Activated naive CD4-positive, alpha-beta T cell treated with anti-CD3 and anti-CD28 coated beads for 36 hours (primary cell): ENCODE measurements at regions of chr6 and their contacts with region 1.

Region 1: DNA sequence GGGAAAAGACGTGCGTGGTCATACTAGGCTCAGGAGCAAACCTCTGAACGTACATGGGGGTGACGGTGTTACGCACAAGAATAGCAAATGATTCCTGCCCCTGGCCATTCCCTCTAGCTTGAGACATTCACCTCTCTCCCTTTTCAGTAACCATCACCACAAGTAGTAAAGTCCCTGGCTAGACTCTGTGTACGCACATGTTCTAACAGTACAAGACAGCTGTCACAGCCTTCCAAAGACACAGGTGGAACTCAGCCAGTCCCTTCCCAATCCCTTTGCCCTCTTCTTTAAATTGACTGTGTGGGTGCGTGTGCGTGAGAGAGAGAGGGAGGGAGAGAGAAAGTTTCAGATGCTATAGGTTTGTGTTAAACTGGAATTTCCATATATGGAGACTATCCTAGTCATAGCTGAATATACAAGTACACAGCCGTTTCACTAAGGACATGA is 67.3 kb downstream of the LY86 start:
- DNase-seq: peak; percentile 49
- H3K4me3 Mint-ChIP-seq: peak overlapping the region; percentile 2
- H3K27ac Mint-ChIP-seq: peak overlapping the region; percentile 90
- H3K4me1 Mint-ChIP-seq: peaks cover 87% of the 10 kb centered on the region
- H3K27me3 Mint-ChIP-seq: no peaks in the 10 kb centered on the region

Region 2: DNA sequence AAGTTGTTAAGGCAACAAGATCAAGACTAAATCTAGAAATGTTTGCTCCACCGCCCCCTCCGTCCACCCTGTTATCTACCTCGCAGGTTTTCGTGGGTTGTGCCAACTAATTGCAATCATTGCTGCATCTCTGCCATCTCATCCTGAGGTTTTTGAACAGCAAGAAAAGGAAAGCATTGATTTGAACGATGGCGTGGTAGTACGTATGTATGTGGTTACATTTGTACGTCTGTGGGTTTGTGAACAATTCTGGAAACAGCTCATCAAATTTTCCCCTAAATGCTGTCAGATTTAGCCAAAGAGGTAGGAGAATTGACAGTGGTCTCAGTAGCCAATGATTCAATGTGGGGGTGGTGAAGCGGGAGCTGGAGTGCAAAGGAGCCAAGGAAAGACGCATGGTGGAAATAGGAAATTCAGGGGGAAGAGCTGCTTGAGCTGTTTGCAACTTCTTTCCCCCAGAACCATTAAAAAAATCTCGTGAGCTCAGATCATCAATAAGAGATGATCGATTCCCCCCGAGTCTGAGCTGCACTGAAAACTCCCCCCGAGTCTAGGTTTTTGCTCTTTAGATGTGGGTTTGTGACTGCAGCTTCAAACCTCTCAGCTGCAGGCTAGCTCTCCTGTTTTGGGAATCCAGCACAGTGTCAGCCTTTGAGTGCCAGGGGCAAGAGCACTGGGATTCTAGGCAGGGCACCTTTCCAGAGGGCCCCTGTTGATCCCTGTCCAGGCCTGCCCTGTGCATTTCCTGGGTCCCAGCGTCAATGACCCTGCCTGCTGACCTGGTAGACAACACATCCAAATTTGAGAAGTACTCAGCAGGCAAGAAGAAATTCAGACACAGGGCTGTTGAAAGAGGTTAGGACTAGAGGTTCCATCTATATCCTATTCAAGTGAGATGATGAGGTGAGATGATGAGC is 139.9 kb before region 1 on chr6:
- CTCF ChIA-PET with region 1: no interaction called
- intact Hi-C with region 1: loop called (anchors 2 kb)
- DNase-seq: peak; percentile 86
- H3K4me3 Mint-ChIP-seq: no peak overlapping the region
- H3K27ac Mint-ChIP-seq: peak overlapping the region; percentile 46
- H3K4me1 Mint-ChIP-seq: peaks cover 23% of the 10 kb centered on the region
- H3K27me3 Mint-ChIP-seq: peaks cover 68% of the 10 kb centered on the region

Region 3: DNA sequence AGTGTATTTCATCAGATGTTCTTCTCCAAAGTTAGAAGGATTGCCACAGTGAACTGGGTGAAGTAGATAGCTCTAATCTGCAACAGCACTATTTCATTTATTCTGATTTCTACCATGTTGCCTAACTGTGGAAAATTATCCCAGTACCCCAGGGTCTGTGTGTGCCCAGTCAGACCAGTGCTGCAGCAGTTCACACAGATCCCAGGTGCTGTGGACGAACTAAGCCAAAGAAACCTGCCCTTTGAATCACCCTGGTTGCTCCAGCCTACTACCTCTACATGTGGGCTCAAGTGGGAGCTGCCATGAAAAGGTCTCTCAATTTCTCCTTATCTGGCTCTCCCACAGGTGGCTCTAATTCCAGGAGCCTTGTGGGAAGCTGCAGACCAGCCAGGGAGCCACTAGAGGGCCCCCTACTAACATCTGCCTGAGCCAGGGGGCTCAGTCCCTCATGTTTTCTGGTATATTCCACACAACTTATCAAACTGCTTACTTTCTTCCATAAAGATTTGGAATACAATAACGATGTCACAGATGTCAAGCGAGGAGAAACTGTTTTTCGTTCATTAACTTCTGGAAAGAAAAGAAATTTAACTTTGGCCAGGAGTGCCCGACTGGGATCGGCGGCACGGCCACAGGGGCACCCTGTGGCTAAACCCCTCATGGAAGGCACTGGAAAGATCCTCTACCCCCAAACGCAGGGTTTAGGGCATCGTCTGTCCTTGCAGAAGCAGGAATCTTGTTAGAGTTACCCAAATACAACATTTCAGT is 98.9 kb before region 1 on chr6:
- CTCF ChIA-PET with region 1: interaction called, 4 read pairs
- intact Hi-C with region 1: loop called (anchors 1 kb)
- DNase-seq: peak; percentile 68
- H3K4me3 Mint-ChIP-seq: no peak overlapping the region
- H3K27ac Mint-ChIP-seq: no peak overlapping the region
- H3K4me1 Mint-ChIP-seq: peaks cover 44% of the 10 kb centered on the region
- H3K27me3 Mint-ChIP-seq: no peaks in the 10 kb centered on the region

Region 4: DNA sequence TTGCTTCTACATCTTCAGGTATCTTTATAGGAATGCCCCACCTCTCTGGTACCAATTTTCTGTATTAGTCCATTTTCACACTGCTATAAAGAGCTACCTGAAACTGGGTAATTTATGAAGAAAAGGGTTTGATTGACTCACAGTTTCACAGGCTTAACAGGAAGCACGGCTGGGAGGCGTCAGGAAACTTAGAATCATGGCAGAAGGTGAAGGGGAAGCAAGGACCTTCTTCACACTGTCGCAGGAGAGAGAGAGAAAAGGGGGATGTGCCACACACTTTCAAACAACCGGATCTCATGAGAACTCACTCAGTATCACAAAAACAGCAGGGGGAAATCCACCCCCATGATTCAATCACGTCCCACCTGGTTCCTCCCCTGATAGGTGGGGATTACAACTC is 91.7 kb before region 1 on chr6:
- CTCF ChIA-PET with region 1: no interaction called
- intact Hi-C with region 1: loop called (anchors 1 kb)
- DNase-seq: peak; percentile 67
- H3K4me3 Mint-ChIP-seq: no peak overlapping the region
- H3K27ac Mint-ChIP-seq: peak overlapping the region; percentile 67
- H3K4me1 Mint-ChIP-seq: peaks cover 46% of the 10 kb centered on the region
- H3K27me3 Mint-ChIP-seq: no peaks in the 10 kb centered on the region

Region 5: GRCh38 chr6:6588064-6588923 is 67.5 kb before region 1 on chr6 and contains the start of gene LY86:
- CTCF ChIA-PET with region 1: interaction called, 3 read pairs
- intact Hi-C with region 1: loop called (anchors 1 kb)
- DNase-seq: peak; percentile 46
- H3K4me3 Mint-ChIP-seq: peak within 1 kb of the TSS; percentile 75
- H3K27ac Mint-ChIP-seq: peak within 1 kb of the TSS; percentile 87
- H3K4me1 Mint-ChIP-seq: peaks cover 75% of the 10 kb centered on the region
- H3K27me3 Mint-ChIP-seq: no peaks in the 10 kb centered on the region
- total RNA-seq, gene LY86: 1.8 to 2.0 TPM

Region 6: GRCh38 chr6:6610031-6610591 is 45.7 kb before region 1 on chr6:
- CTCF ChIA-PET with region 1: no interaction called
- intact Hi-C with region 1: loop called (anchors 1 kb)
- DNase-seq: peak; percentile 73
- H3K4me3 Mint-ChIP-seq: peak overlapping the region; percentile 5
- H3K27ac Mint-ChIP-seq: peak overlapping the region; percentile 83
- H3K4me1 Mint-ChIP-seq: peaks cover 57% of the 10 kb centered on the region
- H3K27me3 Mint-ChIP-seq: no peaks in the 10 kb centered on the region